Dendritic cell treated with granulocyte-macrophage colony-stimulating factor and Interleukin-4, amounts not matched to agents 40 ng/mL and 50 ng/mL, for 4 days (primary cell): ENCODE measurements at regions of chr19 and their contacts with region 1.

Region 1: DNA sequence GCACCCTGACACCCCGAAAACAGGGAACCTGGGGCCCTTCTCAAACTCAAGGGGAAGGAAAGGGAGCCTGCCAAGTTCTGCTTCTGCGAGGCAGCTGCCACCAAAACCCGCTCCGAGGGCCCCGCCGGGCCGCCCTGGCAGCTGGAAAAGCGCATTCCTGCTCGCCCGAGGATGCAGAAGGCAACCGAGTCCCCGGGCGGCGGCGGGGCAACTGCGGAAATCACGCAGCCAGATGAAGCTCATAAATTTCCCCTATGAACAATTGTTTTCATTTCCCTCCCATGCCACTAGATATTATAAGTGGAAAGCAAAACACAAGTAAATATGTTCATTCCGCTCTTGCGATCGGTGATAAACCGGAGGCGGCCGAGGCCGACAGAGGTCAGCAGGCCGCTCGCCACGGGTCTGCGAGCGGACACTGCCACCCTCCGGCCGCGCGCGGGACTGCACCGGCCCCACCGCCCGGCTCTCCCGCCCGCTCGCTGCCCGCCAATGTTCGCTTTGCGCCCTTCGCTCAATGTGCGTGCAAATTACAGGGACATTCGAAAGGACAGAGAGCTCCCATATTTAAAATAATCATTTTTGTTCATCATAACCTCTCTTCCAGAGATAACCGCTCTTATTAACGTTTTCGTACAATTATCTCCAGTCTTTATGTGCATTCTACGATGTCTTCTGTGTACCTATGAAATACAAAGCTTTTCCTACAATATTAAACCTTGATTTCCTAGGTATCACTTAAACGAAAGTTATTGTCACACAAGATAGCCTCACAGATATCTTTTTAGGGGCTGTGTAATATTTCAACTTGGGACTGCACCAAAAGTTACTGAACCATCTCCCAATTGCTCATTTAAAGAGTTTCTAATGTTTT is 120.8 kb upstream of the ZNF507 start:
- H3K4me3 Mint-ChIP-seq: peak overlapping the region; percentile 72
- H3K27ac Mint-ChIP-seq: no peak overlapping the region
- H3K4me1 Mint-ChIP-seq: peaks cover 8% of the 10 kb centered on the region
- H3K27me3 Mint-ChIP-seq: peaks cover 52% of the 10 kb centered on the region

Region 2: GRCh38 chr19:30666301-30666803 is 1558.3 kb before region 1 on chr19:
- intact Hi-C with region 1: loop called (anchors 1 kb)
- H3K4me3 Mint-ChIP-seq: no peak overlapping the region
- H3K27ac Mint-ChIP-seq: no peak overlapping the region
- H3K4me1 Mint-ChIP-seq: no peaks in the 10 kb centered on the region
- H3K27me3 Mint-ChIP-seq: peaks cover 19% of the 10 kb centered on the region

Region 3: DNA sequence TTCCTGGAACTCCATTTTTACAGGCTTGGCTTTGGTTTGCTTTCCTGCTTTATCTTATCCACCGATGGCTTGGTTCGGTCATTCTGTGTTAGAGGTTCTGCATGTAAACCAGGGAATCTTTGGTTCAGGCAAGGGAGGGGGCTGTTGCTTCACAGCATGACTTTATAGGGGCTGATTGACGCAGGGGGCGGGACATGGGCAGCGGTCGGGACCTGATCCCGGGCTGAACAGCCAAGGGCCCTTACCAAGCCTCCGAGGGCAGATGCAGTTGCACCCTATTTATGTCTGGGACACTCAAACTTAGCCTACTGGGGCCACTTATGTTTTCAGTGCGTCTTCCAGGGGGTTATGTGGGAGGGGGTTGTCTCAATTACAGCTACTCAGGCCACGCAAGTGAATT is 1540.0 kb before region 1 on chr19:
- intact Hi-C with region 1: loop called (anchors 2 kb)
- H3K4me3 Mint-ChIP-seq: no peak overlapping the region
- H3K27ac Mint-ChIP-seq: no peak overlapping the region
- H3K4me1 Mint-ChIP-seq: no peaks in the 10 kb centered on the region
- H3K27me3 Mint-ChIP-seq: peaks cover 33% of the 10 kb centered on the region

Region 4: GRCh38 chr19:31979949-31980670 is 244.5 kb before region 1 on chr19:
- intact Hi-C with region 1: no loop called
- H3K4me3 Mint-ChIP-seq: no peak overlapping the region
- H3K27ac Mint-ChIP-seq: no peak overlapping the region
- H3K4me1 Mint-ChIP-seq: no peaks in the 10 kb centered on the region
- H3K27me3 Mint-ChIP-seq: no peaks in the 10 kb centered on the region